B cell (primary cell): ENCODE measurements at regions of chr10 and their contacts with region 1.

Region 1: GRCh38 chr10:74081192-74081803 is 69.3 kb downstream of the AP3M1 start:
- DNase-seq: peak; percentile 66
- ATAC-seq: peak; percentile 50
- H3K4me3 ChIP-seq: no peak overlapping the region
- H3K4me3 Mint-ChIP-seq: no peak overlapping the region
- H3K27ac ChIP-seq: no peak overlapping the region
- H3K27ac Mint-ChIP-seq: no peak overlapping the region
- H3K4me1 ChIP-seq: peaks cover 18 to 20% of the 10 kb centered on the region in 2 donors
- H3K4me1 Mint-ChIP-seq: peaks cover 37% of the 10 kb centered on the region
- H3K27me3 ChIP-seq: no peaks in the 10 kb centered on the region
- H3K27me3 Mint-ChIP-seq: no peaks in the 10 kb centered on the region
- CTCF ChIP-seq: peak; percentile 71

Region 2: DNA sequence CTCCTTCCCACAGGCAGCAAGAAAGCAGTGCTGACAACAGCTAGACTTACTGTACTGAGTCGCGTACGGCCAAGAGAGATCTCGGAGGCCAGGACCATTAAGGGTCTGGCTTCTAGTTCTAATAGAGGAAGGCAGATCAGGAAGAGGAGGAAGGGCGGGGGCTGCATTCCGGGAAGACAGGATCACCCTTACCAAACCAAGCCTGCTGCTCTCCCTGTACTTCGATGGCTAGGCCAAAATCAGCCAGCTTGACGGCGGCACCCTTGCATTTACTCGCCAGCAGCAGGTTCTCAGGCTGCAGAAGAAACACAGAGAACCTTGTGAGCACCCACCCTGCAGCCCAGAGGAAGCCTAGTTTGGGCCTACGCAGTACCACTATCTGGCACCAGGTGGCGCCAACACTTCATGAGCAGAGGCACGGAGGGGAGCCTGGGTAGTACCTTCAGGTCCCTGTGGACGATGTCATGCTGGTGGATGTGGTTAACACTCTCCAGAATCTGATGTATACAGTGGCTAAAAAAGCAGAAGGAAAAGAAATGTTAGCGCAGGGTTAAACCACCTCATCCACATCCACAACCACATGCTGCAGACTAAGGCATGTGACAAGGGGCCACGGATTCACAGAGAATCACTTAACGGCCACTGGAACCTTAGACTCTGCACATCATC is 232.3 kb before region 1 on chr10:
- CTCF ChIA-PET with region 1: interaction called, 6 read pairs
- POLR2A ChIA-PET with region 1: no interaction called
- intact Hi-C with region 1: loop called (anchors 1 kb)
- DNase-seq: peak; percentile 96
- ATAC-seq: peak; percentile 100
- H3K4me3 ChIP-seq: no peak overlapping the region
- H3K4me3 Mint-ChIP-seq: peak overlapping the region; percentile 12
- H3K27ac ChIP-seq: peak overlapping the region; percentile 51 to 71
- H3K27ac Mint-ChIP-seq: peak overlapping the region; percentile 47
- H3K4me1 ChIP-seq: peaks cover 7 to 17% of the 10 kb centered on the region in 2 donors
- H3K4me1 Mint-ChIP-seq: peaks cover 13% of the 10 kb centered on the region
- H3K27me3 ChIP-seq: no peaks in the 10 kb centered on the region
- H3K27me3 Mint-ChIP-seq: no peaks in the 10 kb centered on the region
- CTCF ChIP-seq: peak; percentile 99

Region 3: GRCh38 chr10:74027702-74028101 is 53.6 kb before region 1 on chr10:
- CTCF ChIA-PET with region 1: no interaction called
- POLR2A ChIA-PET with region 1: no interaction called
- intact Hi-C with region 1: no loop called
- DNase-seq: no peak
- ATAC-seq: no peak
- H3K4me3 ChIP-seq: no peak overlapping the region
- H3K4me3 Mint-ChIP-seq: no peak overlapping the region
- H3K27ac ChIP-seq: no peak overlapping the region
- H3K27ac Mint-ChIP-seq: no peak overlapping the region
- H3K4me1 ChIP-seq: no peaks in the 10 kb centered on the region
- H3K4me1 Mint-ChIP-seq: peaks cover 5% of the 10 kb centered on the region
- H3K27me3 ChIP-seq: no peaks in the 10 kb centered on the region
- H3K27me3 Mint-ChIP-seq: no peaks in the 10 kb centered on the region
- CTCF ChIP-seq: no peak

Region 4: DNA sequence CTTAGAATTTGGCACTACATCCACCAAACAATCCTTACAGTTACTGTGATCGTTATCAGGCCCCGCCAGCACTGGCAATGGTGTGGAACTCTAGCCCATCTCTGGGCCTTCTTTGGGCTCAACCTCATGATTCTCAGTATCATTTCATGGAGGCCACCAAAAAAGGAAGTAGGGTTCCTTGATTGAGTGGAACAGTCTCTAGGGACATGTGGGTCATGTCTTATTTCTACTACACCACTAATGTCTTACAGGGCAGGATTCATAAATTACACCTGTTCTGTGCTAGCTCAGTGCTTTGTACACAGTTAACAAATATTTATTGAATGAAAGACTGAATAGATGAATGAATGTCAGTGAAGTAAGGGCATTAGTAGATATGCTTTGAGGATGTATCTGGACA is 15.5 kb after region 1 on chr10:
- CTCF ChIA-PET with region 1: interaction called, 11 read pairs
- POLR2A ChIA-PET with region 1: no interaction called
- intact Hi-C with region 1: no loop called
- DNase-seq: peak; percentile 65
- ATAC-seq: peak; percentile 96
- H3K4me3 ChIP-seq: no peak overlapping the region
- H3K4me3 Mint-ChIP-seq: peak overlapping the region; percentile 24
- H3K27ac ChIP-seq: peak overlapping the region in 1 of 2 donors; percentile 38
- H3K27ac Mint-ChIP-seq: peak overlapping the region; percentile 76
- H3K4me1 ChIP-seq: peaks cover 11 to 13% of the 10 kb centered on the region in 2 donors
- H3K4me1 Mint-ChIP-seq: peaks cover 21% of the 10 kb centered on the region
- H3K27me3 ChIP-seq: no peaks in the 10 kb centered on the region
- H3K27me3 Mint-ChIP-seq: no peaks in the 10 kb centered on the region
- CTCF ChIP-seq: no peak

Region 5: DNA sequence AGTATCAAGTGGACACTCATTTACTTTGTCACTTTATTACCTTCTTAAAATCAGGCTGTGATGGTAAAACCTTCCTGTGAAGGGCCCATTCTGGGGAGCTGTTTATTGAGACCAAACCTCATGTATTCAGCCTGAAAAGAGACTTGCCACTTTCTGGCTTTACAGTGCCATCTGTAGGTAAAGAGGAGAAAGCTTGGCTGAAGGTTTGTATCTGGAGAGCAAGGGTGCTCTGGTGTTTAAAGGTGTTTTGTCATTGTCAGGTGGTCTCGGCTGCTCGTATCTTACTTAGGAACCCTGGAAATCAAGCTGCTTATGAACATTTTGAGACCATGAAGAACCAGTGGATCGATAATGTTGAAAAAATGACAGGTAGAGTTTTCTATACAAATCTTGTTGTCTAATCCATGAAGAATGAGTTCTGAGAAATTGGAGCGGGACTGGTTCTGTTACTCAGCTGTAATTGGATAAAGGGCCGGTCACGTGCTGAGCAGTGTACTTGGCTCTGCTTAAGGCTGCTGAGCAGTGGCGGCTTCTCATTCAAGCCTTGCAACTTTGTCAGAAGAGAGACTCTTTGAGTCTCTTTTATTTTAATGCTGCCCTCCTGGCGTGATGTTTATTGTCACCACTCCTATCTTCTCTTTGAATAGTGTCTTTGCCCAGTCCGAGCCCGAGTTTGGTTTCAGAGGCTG is 22.4 kb after region 1 on chr10:
- CTCF ChIA-PET with region 1: interaction called, 11 read pairs
- POLR2A ChIA-PET with region 1: no interaction called
- intact Hi-C with region 1: no loop called
- DNase-seq: peak; percentile 26
- ATAC-seq: no peak
- H3K4me3 ChIP-seq: no peak overlapping the region
- H3K4me3 Mint-ChIP-seq: no peak overlapping the region
- H3K27ac ChIP-seq: no peak overlapping the region
- H3K27ac Mint-ChIP-seq: no peak overlapping the region
- H3K4me1 ChIP-seq: no peaks in the 10 kb centered on the region
- H3K4me1 Mint-ChIP-seq: peaks cover 2% of the 10 kb centered on the region
- H3K27me3 ChIP-seq: no peaks in the 10 kb centered on the region
- H3K27me3 Mint-ChIP-seq: no peaks in the 10 kb centered on the region
- CTCF ChIP-seq: peak; percentile 9

Region 6: GRCh38 chr10:74118804-74119203 is 37.5 kb after region 1 on chr10:
- CTCF ChIA-PET with region 1: no interaction called
- POLR2A ChIA-PET with region 1: no interaction called
- intact Hi-C with region 1: no loop called
- DNase-seq: no peak
- ATAC-seq: no peak
- H3K4me3 ChIP-seq: no peak overlapping the region
- H3K4me3 Mint-ChIP-seq: no peak overlapping the region
- H3K27ac ChIP-seq: peak overlapping the region in 1 of 2 donors; percentile 40
- H3K27ac Mint-ChIP-seq: peak overlapping the region; percentile 16
- H3K4me1 ChIP-seq: no peaks in the 10 kb centered on the region
- H3K4me1 Mint-ChIP-seq: no peaks in the 10 kb centered on the region
- H3K27me3 ChIP-seq: no peaks in the 10 kb centered on the region
- H3K27me3 Mint-ChIP-seq: no peaks in the 10 kb centered on the region
- CTCF ChIP-seq: no peak

Region 7: DNA sequence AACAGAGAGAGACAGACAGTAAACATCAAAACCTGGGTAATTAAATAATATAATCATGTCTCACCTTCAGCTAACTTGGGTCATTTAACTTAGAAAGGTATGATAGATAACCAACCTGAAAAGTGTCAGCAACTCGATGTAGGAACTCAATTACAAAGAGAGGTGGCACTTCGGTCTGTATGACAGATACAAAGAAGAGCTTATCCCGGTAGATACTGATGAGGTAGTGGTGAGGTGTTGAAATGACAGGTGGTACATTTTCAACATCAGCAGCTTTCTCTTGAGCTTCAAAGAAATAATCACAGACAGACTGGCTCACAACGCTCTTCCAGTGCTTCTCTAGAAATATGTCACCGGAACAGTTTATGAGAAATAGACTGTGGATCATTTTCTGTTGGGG is 56.7 kb after region 1 on chr10:
- CTCF ChIA-PET with region 1: no interaction called
- POLR2A ChIA-PET with region 1: no interaction called
- intact Hi-C with region 1: no loop called
- DNase-seq: peak; percentile 25
- ATAC-seq: no peak
- H3K4me3 ChIP-seq: no peak overlapping the region
- H3K4me3 Mint-ChIP-seq: no peak overlapping the region
- H3K27ac ChIP-seq: no peak overlapping the region
- H3K27ac Mint-ChIP-seq: no peak overlapping the region
- H3K4me1 ChIP-seq: no peaks in the 10 kb centered on the region
- H3K4me1 Mint-ChIP-seq: no peaks in the 10 kb centered on the region
- H3K27me3 ChIP-seq: no peaks in the 10 kb centered on the region
- H3K27me3 Mint-ChIP-seq: no peaks in the 10 kb centered on the region
- CTCF ChIP-seq: no peak